HepG2 (cell line): ENCODE measurements at regions of chr14 and their contacts with region 1.

Region 1: GRCh38 chr14:20613094-20614037 is 22.2 kb upstream of the RNASE12 start:
- DNase-seq: peak; percentile 99
- ATAC-seq: peak; percentile 84
- H3K4me3 ChIP-seq: peak overlapping the region; percentile 70 to 83 (median 77)
- H3K27ac ChIP-seq: peak overlapping the region; percentile 73
- H3K4me1 ChIP-seq: peaks cover 77% of the 10 kb centered on the region
- H3K27me3 ChIP-seq: no peaks in the 10 kb centered on the region; a peak in 1 of 5 replicates
- CTCF ChIP-seq: peak; percentile 92
- EP300 ChIP-seq: peak in 1 of 2 experiments; percentile 30; a peak in 1 of 4 replicates
- POLR2A ChIP-seq: no peak
- RAD21 ChIP-seq: peak; percentile 19; the same call in 1 of the 2 replicates

Region 2: GRCh38 chr14:20327005-20327869 is 286.1 kb before region 1 on chr14:
- CTCF ChIA-PET with region 1: interaction called, 26 read pairs
- POLR2A ChIA-PET with region 1: interaction called, 5 read pairs
- in situ Hi-C with region 1: loop called (anchors 5 kb)
- intact Hi-C with region 1: loop called (anchors 2 kb)
- DNase-seq: peak; percentile 79
- ATAC-seq: peak; percentile 54; the same call in 2 of the 3 replicates
- H3K4me3 ChIP-seq: no peak overlapping the region
- H3K27ac ChIP-seq: peak overlapping the region; percentile 4
- H3K4me1 ChIP-seq: peaks cover 49% of the 10 kb centered on the region
- H3K27me3 ChIP-seq: no peaks in the 10 kb centered on the region
- CTCF ChIP-seq: peak; percentile 84
- EP300 ChIP-seq: no peak
- POLR2A ChIP-seq: no peak
- RAD21 ChIP-seq: peak; percentile 81

Region 3: DNA sequence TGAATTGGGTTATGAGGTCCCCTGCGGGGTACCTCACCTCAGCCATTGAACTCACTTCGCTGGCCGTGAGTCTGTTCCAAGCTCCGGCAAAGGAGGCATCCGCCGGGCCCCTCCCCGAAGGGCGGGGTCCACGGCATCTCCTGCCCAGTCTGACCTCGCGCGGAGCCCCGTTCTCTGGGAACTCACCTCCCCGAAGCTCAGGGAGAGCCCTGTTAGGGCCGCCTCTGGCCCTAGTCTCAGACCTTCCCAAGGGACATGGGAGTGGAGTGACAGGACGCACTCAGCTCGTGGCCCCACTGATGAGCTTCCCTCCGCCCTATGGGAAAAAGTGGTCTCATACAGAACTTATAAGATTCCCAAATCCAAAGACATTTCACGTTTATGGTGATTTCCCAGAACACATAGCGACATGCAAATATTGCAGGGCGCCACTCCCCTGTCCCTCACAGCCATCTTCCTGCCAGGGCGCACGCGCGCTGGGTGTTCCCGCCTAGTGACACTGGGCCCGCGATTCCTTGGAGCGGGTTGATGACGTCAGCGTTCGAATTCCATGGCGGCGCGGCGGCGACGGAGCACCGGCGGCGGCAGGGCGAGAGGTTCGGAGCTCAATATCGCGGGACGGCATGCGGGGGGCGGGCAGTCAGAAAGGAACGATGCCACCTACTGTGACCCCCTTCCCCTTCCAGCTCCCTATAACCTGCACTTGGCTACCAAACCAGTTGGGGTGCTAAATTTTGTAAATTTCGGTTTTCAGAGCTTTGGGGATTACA is 270.1 kb before region 1 on chr14 and contains the start of gene PARP2:
- CTCF ChIA-PET with region 1: no interaction called
- POLR2A ChIA-PET with region 1: interaction called, 24 read pairs
- in situ Hi-C with region 1: no loop called
- intact Hi-C with region 1: loop called (anchors 1 kb)
- DNase-seq: peak; percentile 100
- ATAC-seq: peak; percentile 99
- H3K4me3 ChIP-seq: peak within 1 kb of the TSS; percentile 82 to 88 (median 86)
- H3K27ac ChIP-seq: peak within 1 kb of the TSS; percentile 89
- H3K4me1 ChIP-seq: peaks cover 24% of the 10 kb centered on the region
- H3K27me3 ChIP-seq: no peaks in the 10 kb centered on the region; a peak in 1 of 5 replicates
- CTCF ChIP-seq: peak; percentile 25; the same call in 1 of the 2 replicates
- EP300 ChIP-seq: no peak; a peak in 1 of 4 replicates
- POLR2A ChIP-seq: peak; percentile 82 to 99
- RAD21 ChIP-seq: peak; percentile 42; the same call in 1 of the 2 replicates
- total RNA-seq, gene PARP2: 37.3 and 39.1 TPM in 2 replicates

Region 4: DNA sequence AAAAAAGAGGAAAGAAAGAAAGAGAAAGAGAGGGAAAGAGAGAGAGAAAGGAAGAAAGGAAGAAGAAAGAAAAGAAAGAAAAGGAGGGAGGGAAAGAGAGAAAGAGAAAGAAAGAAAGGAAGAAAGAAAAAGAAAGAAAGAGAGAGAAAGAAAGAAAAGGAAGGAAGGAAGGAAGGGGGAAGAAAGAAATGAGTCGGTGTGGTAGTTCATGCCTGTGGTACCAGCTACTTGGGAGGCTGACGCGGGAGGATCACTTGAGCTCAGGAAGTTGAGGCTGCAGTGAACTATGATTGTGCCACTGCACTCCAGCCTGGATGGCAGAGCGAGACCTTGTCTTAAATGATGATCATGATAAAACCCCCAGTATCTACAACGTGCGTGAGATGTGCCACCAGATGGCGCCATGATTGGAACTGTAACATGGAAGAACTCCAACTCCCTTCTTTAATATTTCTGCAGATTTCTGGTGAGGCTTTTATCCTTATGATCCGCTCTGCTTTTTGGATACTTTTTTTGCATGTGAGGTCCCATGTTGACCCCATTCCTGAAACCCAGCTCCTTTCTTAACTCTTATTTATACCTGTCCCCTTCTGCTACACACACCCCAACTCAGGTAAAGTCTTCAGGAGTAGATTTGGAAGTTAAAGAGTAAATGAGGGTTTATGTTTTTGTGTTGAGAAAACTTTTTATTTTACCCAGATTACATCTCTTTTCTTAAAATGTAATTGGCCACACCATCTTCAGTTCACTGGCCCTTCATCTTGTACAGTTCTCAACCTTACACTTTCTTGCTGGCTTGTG is 82.4 kb before region 1 on chr14:
- CTCF ChIA-PET with region 1: interaction called, 26 read pairs
- POLR2A ChIA-PET with region 1: no interaction called
- in situ Hi-C with region 1: loop called (anchors 5 kb)
- intact Hi-C with region 1: no loop called
- DNase-seq: peak; percentile 75
- ATAC-seq: peak; percentile 94
- H3K4me3 ChIP-seq: no peak overlapping the region
- H3K27ac ChIP-seq: no peak overlapping the region
- H3K4me1 ChIP-seq: peaks cover 9% of the 10 kb centered on the region; the same call in 1 of the 2 replicates
- H3K27me3 ChIP-seq: no peaks in the 10 kb centered on the region; a peak in 2 of 5 replicates
- CTCF ChIP-seq: peak; percentile 83
- EP300 ChIP-seq: no peak
- POLR2A ChIP-seq: no peak
- RAD21 ChIP-seq: peak; percentile 54; the same call in 1 of the 2 replicates

Region 5: DNA sequence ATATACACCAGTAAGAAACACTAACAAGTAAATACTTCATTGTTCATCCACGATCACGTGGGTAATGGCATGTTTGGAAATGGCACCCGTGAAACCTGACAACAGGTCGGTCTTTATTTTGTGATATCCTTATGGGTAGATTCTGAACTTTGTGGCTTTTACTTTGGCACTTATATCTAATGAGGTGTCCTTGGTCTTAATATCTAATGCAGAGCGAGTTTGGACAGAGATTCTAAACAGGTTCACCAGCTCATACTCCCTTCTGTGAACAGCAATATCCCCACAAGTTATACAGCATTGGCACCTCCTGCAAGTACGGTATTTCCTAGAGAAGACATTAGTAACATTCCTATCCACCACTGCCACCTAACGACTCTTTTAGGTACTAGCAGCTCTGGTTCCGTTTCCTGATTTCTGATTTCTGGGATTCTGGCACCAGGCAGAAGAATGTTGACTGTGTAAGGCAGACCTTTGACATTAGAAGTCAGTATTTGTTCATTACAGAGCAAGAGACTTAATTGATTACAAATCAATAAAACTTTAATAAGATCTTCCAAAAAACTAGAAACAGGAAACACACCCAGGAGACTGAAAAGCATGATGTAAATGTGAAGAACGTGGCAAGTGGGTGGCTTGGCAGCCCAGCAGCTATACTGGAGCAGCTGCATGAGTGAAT is 77.6 kb after region 1 on chr14:
- CTCF ChIA-PET with region 1: interaction called, 48 read pairs
- POLR2A ChIA-PET with region 1: interaction called, 105 read pairs
- in situ Hi-C with region 1: no loop called
- intact Hi-C with region 1: loop called (anchors 1 kb)
- DNase-seq: peak; percentile 84
- ATAC-seq: peak; percentile 52
- H3K4me3 ChIP-seq: peak overlapping the region in 2 of 3 experiments; percentile 2 to 32; a peak in 1 of 6 replicates
- H3K27ac ChIP-seq: peak overlapping the region; percentile 37
- H3K4me1 ChIP-seq: peaks cover 45% of the 10 kb centered on the region
- H3K27me3 ChIP-seq: no peaks in the 10 kb centered on the region; a peak in 1 of 5 replicates
- CTCF ChIP-seq: peak; percentile 93
- EP300 ChIP-seq: no peak
- POLR2A ChIP-seq: peak in 1 of 2 experiments; percentile 25; a peak in 1 of 4 replicates
- RAD21 ChIP-seq: peak; percentile 88

Region 6: GRCh38 chr14:20723488-20723887 is 110.1 kb after region 1 on chr14:
- CTCF ChIA-PET with region 1: no interaction called
- POLR2A ChIA-PET with region 1: no interaction called
- in situ Hi-C with region 1: no loop called
- intact Hi-C with region 1: no loop called
- DNase-seq: no peak
- ATAC-seq: no peak
- H3K4me3 ChIP-seq: no peak overlapping the region
- H3K27ac ChIP-seq: no peak overlapping the region
- H3K4me1 ChIP-seq: no peaks in the 10 kb centered on the region
- H3K27me3 ChIP-seq: peaks cover 0 to 12% of the 10 kb centered on the region in 2 experiments; a peak in 2 of 5 replicates
- CTCF ChIP-seq: no peak
- EP300 ChIP-seq: no peak
- POLR2A ChIP-seq: no peak
- RAD21 ChIP-seq: no peak